ENCODE measurements at regions of chr1 and their contacts with region 1.

Region 1: DNA sequence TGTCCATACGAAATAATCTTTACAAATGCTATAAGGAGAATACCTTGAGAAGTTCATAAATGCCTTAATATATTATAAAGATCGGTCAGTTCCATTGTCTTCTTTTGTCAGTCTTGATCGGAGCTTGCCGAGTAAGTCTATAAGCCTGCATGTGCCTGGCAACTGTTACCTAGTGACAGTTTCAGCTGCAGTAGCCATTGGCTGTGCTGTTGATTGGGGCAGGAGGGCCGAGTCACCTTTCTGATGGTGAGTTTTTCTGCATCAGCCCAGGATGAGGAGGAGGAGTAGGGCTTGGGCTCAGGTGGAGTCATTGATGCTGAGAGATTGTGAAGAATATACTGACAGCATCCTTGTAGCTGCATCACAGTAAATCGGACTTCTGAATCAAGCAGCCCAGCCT is 1.9 kb upstream of the GPR52 start:
- DNase-seq: no peak
- ATAC-seq: peak; percentile 32 to 77 (median 57)
- H3K4me3 ChIP-seq: no peak overlapping the region
- H3K27ac ChIP-seq: no peak overlapping the region
- H3K4me1 ChIP-seq: peaks cover 0 to 24% (median 6%) of the 10 kb centered on the region in 12 donors
- H3K27me3 ChIP-seq: no peaks in the 10 kb centered on the region
- CTCF ChIP-seq: no peak
- POLR2A ChIP-seq: no peak

Region 2: GRCh38 chr1:174469687-174470086 is 23.9 kb after region 1 on chr1:
- intact Hi-C with region 1: loop called in 1 of 10 experiments (anchors 1 kb)
- DNase-seq: no peak
- ATAC-seq: peak; percentile 52 to 73 (median 70)
- H3K4me3 ChIP-seq: no peak overlapping the region
- H3K27ac ChIP-seq: no peak overlapping the region
- H3K4me1 ChIP-seq: peaks cover 0 to 17% (median 0%) of the 10 kb centered on the region in 12 donors
- H3K27me3 ChIP-seq: no peaks in the 10 kb centered on the region
- CTCF ChIP-seq: no peak
- POLR2A ChIP-seq: no peak